ENCODE measurements at regions of chr7 and their contacts with region 1.

Region 1: DNA sequence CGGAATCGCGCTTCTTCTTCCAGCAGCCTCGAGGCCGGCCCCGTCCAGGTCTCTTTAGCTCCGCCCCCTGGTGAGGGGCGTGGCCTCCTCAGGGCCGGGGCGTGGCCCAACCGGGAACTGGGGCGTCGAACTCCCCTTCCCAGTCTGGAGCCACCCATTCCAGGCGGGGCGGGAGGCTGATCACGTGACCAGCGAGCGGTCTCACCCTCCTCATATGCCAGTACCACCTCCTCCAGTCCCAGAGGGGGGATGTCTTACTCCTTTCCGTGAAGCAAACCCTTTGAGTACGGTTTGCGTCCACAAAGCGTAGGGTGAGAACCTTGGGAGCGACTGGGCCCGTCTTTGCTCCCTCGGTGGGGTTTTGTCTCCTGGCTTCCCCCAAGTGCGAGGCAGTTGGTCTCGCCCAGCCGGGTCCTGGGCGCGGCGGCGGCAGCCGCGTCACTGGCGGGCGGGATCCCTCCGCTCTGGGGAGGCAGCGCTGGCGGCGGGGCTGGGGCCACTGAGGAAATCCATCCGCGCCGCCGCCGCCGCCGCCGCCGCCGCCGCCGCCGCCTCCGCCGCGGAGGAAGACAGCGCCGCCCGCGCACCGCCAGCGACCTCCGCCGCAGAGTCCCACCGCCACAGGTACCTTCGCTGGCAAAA is at the start of gene GNB2:
- DNase-seq: peak; percentile 100
- H3K4me3 Mint-ChIP-seq: peak within 1 kb of the TSS; percentile 95
- H3K27ac Mint-ChIP-seq: peak within 1 kb of the TSS; percentile 97
- H3K4me1 Mint-ChIP-seq: peaks cover 8% of the 10 kb centered on the region
- H3K27me3 Mint-ChIP-seq: no peaks in the 10 kb centered on the region
- total RNA-seq, gene GNB2: 228 to 231 TPM

Region 2: DNA sequence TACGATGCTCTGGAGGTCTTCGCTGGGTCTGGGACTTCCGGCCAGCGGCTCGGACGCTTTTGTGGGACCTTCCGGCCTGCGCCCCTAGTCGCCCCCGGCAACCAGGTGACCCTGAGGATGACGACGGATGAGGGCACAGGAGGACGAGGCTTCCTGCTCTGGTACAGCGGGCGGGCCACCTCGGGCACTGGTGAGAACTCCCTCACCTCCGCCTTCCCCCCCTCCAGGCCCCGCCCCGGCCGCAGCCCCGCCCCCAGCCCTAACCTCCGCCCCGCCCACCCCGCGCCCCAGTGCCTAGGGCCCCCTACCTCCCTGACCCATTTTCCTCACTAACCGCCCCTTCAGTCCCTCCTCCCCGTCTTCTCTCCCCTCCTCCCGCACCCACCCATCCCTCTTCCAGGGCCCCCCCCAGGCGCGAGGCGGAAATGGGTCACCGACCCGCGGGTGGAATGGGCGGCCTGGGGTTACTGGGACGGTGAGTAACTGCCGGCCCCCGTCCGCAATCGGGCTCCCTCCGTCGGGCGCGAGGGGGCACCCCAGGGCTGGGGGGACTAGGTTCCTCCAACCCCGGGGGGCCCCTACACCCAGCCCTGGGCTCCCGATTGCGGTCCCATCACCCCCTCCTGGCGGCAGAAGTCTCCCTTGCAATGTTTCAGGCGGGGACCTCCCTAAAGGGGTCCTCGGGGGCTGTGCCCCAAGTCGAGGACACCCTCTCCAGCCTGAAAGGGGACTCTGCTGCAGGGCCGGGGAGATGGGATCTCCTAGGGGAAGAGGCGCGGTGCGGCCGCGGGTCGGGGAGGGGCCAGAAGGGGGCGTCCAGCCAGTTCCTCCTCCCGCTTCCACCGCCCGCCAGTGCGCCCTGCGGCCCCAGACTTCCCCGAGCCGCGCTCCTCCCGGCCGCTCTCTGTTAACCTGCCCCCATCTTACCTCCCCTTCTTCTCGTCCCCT is 69.1 kb before region 1 on chr7:
- CTCF ChIA-PET with region 1: interaction called, 3 read pairs
- POLR2A ChIA-PET with region 1: no interaction called
- intact Hi-C with region 1: loop called (anchors 1 kb)
- DNase-seq: peak; percentile 85
- H3K4me3 Mint-ChIP-seq: peak overlapping the region; percentile 80
- H3K27ac Mint-ChIP-seq: peak overlapping the region; percentile 52
- H3K4me1 Mint-ChIP-seq: peaks cover 18% of the 10 kb centered on the region
- H3K27me3 Mint-ChIP-seq: no peaks in the 10 kb centered on the region

Region 3: DNA sequence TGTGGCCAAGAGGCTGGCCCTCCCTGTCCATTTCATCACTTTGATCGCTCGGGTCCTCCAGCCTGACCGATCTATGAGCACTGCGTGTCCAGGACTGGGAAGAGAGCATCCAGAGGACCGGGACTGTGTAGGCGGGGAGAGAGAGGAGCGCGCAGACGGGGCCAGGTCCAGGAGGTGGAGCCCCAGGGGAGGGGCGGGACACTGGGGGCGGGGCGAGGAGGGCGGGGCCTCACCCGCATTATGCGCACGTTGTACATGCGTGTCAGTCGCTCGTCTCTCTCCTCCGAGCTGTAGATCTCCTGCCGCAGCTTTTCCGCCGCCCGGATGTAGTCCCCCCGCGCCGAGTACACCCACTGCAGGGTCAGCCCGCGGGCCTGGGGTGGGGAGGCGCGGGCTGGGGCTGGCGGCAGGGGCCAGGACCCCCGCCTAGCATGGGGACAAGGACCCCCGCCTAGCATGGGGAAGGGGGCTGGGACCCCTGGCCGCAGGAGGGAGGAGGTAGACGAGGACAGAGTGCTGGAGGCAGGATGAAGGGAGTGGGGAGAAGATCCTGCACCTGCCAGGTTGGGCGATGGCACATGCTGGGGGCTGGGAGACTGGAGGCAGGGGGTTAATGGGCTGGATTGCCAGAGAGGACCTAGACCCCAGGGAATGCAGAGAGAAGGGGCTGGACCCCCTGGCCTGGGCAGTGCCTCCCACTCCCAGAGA is 46.7 kb before region 1 on chr7:
- CTCF ChIA-PET with region 1: no interaction called
- POLR2A ChIA-PET with region 1: no interaction called
- intact Hi-C with region 1: loop called (anchors 1 kb)
- DNase-seq: peak; percentile 96
- H3K4me3 Mint-ChIP-seq: peak overlapping the region; percentile 65
- H3K27ac Mint-ChIP-seq: peak overlapping the region; percentile 38
- H3K4me1 Mint-ChIP-seq: peaks cover 12% of the 10 kb centered on the region
- H3K27me3 Mint-ChIP-seq: no peaks in the 10 kb centered on the region

Measured in activated CD4-positive, alpha-beta memory T cell treated with anti-CD3 and anti-CD28 coated beads for 36 hours (primary cell).